HepG2 (cell line): ENCODE measurements at regions of chr9 and their contacts with region 1.

Region 1: GRCh38 chr9:72271613-72272478 is 93.2 kb downstream of the ZFAND5 start:
- DNase-seq: peak; percentile 46
- ATAC-seq: peak; percentile 73
- H3K4me3 ChIP-seq: no peak overlapping the region
- H3K27ac ChIP-seq: no peak overlapping the region
- H3K4me1 ChIP-seq: no peaks in the 10 kb centered on the region
- H3K27me3 ChIP-seq: no peaks in the 10 kb centered on the region
- CTCF ChIP-seq: peak; percentile 81
- EP300 ChIP-seq: no peak
- POLR2A ChIP-seq: no peak
- RAD21 ChIP-seq: peak; percentile 62; the same call in 1 of the 2 replicates

Region 2: GRCh38 chr9:72203205-72203803 is 68.5 kb before region 1 on chr9:
- CTCF ChIA-PET with region 1: interaction called, 16 read pairs
- POLR2A ChIA-PET with region 1: no interaction called
- in situ Hi-C with region 1: loop called (anchors 5 kb)
- intact Hi-C with region 1: loop called (anchors 1 kb)
- DNase-seq: peak; percentile 53
- ATAC-seq: peak; percentile 99
- H3K4me3 ChIP-seq: no peak overlapping the region
- H3K27ac ChIP-seq: no peak overlapping the region
- H3K4me1 ChIP-seq: peaks cover 16% of the 10 kb centered on the region
- H3K27me3 ChIP-seq: no peaks in the 10 kb centered on the region
- CTCF ChIP-seq: peak; percentile 79
- EP300 ChIP-seq: no peak
- POLR2A ChIP-seq: no peak
- RAD21 ChIP-seq: 0 out of 2 replicates have a peak, but pooled peaks have one; percentile 20